Activated CD4-positive, alpha-beta T cell treated with anti-CD3 and anti-CD28 coated beads for 36 hours (primary cell): ENCODE measurements at regions of chr19 and their contacts with region 1.

Region 1: GRCh38 chr19:45994989-45995714 is at the start of gene CCDC61:
- DNase-seq: peak; percentile 96
- ATAC-seq: peak; percentile 98
- H3K4me3 Mint-ChIP-seq: no peak within 1 kb of the TSS
- H3K27ac Mint-ChIP-seq: no peak within 1 kb of the TSS
- H3K4me1 Mint-ChIP-seq: peaks cover 22% of the 10 kb centered on the region
- H3K27me3 Mint-ChIP-seq: peaks cover 7% of the 10 kb centered on the region
- total RNA-seq, gene CCDC61: 22.4 to 26.2 TPM

Region 2: DNA sequence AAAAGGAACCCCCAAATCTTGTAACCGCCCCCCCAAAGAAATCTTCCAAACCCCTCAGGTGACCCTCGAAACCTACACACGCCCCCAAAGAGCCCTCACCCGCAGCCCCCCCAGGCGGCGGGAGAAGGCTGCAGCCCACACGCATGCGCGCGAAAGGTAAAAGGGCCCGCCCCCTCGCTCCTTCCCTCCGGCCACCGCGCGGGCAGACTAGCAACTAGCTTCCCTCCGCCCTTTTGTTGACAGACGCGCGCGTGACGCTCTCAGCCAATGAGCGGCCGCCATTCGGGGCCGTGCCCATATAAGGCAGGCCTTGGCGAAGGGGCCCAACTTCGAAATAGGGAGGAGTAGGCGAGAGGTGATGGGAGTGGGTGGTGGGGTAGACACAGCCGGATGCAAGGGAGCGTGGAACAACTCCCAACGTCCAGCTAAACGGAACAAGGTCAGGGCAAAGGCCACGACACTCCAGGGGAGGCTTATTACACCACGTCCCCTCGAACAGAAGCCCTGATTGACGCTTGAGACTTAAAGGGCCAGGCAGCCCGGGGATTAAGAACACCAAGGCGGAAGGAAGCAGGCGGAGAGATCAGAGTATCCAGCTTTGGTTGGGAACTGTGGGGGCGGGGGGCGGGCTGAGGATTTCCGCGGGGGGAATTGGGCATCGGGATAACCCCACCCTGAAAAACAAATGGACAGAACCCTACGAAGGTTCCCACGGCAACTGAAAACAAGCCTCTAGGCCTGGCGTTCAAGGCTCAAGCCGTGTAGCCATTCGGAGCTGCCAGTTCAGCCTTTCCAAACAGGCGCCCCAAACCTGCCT is 277.8 kb before region 1 on chr19:
- CTCF ChIA-PET with region 1: no interaction called
- POLR2A ChIA-PET with region 1: no interaction called
- intact Hi-C with region 1: loop called in 1 of 2 experiments (anchors 1 kb)
- DNase-seq: peak; percentile 99
- ATAC-seq: peak; percentile 97
- H3K4me3 Mint-ChIP-seq: peak overlapping the region; percentile 93
- H3K27ac Mint-ChIP-seq: peak overlapping the region; percentile 94
- H3K4me1 Mint-ChIP-seq: peaks cover 40% of the 10 kb centered on the region
- H3K27me3 Mint-ChIP-seq: no peaks in the 10 kb centered on the region

Region 3: DNA sequence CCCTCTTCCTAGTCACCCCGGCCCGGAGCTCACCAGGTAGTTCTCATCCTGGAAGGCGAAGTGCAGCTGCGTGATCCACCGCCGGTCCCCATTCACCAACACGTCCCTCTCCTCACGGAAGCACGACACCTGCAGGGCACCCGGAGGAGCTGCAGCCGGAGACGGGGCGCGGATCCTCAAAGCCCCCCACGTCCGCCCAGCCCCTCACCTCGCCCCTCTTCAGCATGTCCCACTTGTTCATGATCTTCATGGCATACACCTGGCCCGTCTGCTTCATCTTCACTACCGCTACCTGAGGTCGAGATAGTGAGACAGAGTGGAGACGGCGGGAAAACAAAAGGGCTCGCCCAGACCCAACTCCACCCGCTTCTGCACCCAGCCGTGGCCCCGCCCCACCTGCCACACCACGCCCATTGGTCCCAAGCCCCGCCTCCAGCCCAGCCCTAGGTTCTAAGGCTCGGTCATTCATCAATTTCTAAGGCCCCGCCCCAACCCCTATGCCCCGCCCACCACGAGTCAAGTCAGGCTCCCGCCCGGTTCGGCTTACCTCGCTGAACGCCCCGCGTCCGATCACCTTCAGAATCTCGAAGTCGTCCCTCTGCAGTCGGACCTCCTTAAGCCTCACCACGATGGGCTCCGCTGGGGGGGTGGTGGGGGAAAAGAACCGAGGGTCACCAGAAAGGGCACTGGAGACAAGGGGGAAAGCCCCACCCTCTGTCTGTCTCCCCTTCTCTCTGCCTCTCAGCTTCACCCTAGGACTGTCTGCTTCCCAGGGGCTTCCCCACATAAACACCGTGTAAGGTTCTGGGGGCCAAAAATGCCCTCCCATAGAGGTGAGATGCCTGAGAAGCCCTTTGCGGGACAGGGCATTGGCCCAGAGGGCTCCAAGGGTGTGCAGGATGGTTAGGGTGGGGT is 215.7 kb before region 1 on chr19:
- CTCF ChIA-PET with region 1: no interaction called
- POLR2A ChIA-PET with region 1: no interaction called
- intact Hi-C with region 1: loop called in 1 of 2 experiments (anchors 1 kb)
- DNase-seq: peak; percentile 97
- ATAC-seq: peak; percentile 99
- H3K4me3 Mint-ChIP-seq: peak overlapping the region; percentile 47
- H3K27ac Mint-ChIP-seq: no peak overlapping the region
- H3K4me1 Mint-ChIP-seq: peaks cover 16% of the 10 kb centered on the region
- H3K27me3 Mint-ChIP-seq: peaks cover 9% of the 10 kb centered on the region

Region 4: GRCh38 chr19:45902651-45903625 is 92.2 kb before region 1 on chr19:
- CTCF ChIA-PET with region 1: interaction called, 4 read pairs
- POLR2A ChIA-PET with region 1: interaction called, 4 read pairs
- intact Hi-C with region 1: loop called in 1 of 2 experiments (anchors 1 kb)
- DNase-seq: peak; percentile 100
- ATAC-seq: peak; percentile 88
- H3K4me3 Mint-ChIP-seq: peak overlapping the region; percentile 88
- H3K27ac Mint-ChIP-seq: peak overlapping the region; percentile 75
- H3K4me1 Mint-ChIP-seq: peaks cover 16% of the 10 kb centered on the region
- H3K27me3 Mint-ChIP-seq: no peaks in the 10 kb centered on the region

Region 5: GRCh38 chr19:45973578-45974338 is 21.4 kb before region 1 on chr19 and contains the start of gene NOVA2:
- CTCF ChIA-PET with region 1: interaction called, 4 read pairs
- POLR2A ChIA-PET with region 1: no interaction called
- intact Hi-C with region 1: loop called in 1 of 2 experiments (anchors 1 kb)
- DNase-seq: peak; percentile 78
- ATAC-seq: peak; percentile 82
- H3K4me3 Mint-ChIP-seq: no peak within 1 kb of the TSS
- H3K27ac Mint-ChIP-seq: no peak within 1 kb of the TSS
- H3K4me1 Mint-ChIP-seq: peaks cover 17% of the 10 kb centered on the region
- H3K27me3 Mint-ChIP-seq: peaks cover 51% of the 10 kb centered on the region
- total RNA-seq, gene NOVA2: 0.02 to 0.09 TPM

Region 6: GRCh38 chr19:46346821-46347571 is 351.8 kb after region 1 on chr19 and contains the start of gene PPP5C:
- CTCF ChIA-PET with region 1: no interaction called
- POLR2A ChIA-PET with region 1: no interaction called
- intact Hi-C with region 1: loop called in 1 of 2 experiments (anchors 1 kb)
- DNase-seq: peak; percentile 94
- ATAC-seq: peak; percentile 74
- H3K4me3 Mint-ChIP-seq: peak within 1 kb of the TSS; percentile 90
- H3K27ac Mint-ChIP-seq: peak within 1 kb of the TSS; percentile 91
- H3K4me1 Mint-ChIP-seq: peaks cover 41% of the 10 kb centered on the region
- H3K27me3 Mint-ChIP-seq: no peaks in the 10 kb centered on the region
- total RNA-seq, gene PPP5C: 100.0 to 129 TPM